Heart left ventricle (tissue), 16 donors: ENCODE measurements at regions of chr1 and their contacts with region 1.

Region 1: GRCh38 chr1:231240883-231241735 is at the start of gene GNPAT:
- DNase-seq: peak; percentile 89 to 95 (median 91)
- ATAC-seq: peak; percentile 98 to 99 (median 98)
- H3K4me3 ChIP-seq: peak within 1 kb of the TSS; percentile 65 to 94 (median 78)
- H3K27ac ChIP-seq: peak within 1 kb of the TSS; percentile 31 to 90 (median 84)
- H3K4me1 ChIP-seq: peaks cover 0 to 50% (median 30%) of the 10 kb centered on the region in 12 donors
- H3K27me3 ChIP-seq: no peaks in the 10 kb centered on the region
- CTCF ChIP-seq: no peak
- POLR2A ChIP-seq: peak in 1 of 2 donors; percentile 84
- total RNA-seq, gene GNPAT: 43.3 to 62.6 (median 52.8) TPM

Region 2: GRCh38 chr1:231278100-231278790 is 37.1 kb after region 1 on chr1:
- intact Hi-C with region 1: no loop called
- DNase-seq: peak; percentile 53 to 87 (median 64)
- ATAC-seq: peak; percentile 96 to 97 (median 96)
- H3K4me3 ChIP-seq: no peak overlapping the region
- H3K27ac ChIP-seq: peak overlapping the region; percentile 12 to 82 (median 69)
- H3K4me1 ChIP-seq: peaks cover 0 to 9% (median 4%) of the 10 kb centered on the region in 12 donors
- H3K27me3 ChIP-seq: no peaks in the 10 kb centered on the region
- CTCF ChIP-seq: no peak
- POLR2A ChIP-seq: no peak

Region 3: GRCh38 chr1:231337472-231338269 is 96.6 kb after region 1 on chr1 and contains the start of gene EXOC8:
- intact Hi-C with region 1: loop called in 5 of 10 experiments (anchors 2 to 10 kb)
- DNase-seq: peak; percentile 94 to 98 (median 95)
- ATAC-seq: peak; percentile 95 to 97 (median 96)
- H3K4me3 ChIP-seq: peak within 1 kb of the TSS; percentile 63 to 96 (median 82)
- H3K27ac ChIP-seq: peak within 1 kb of the TSS; percentile 76 to 98 (median 96)
- H3K4me1 ChIP-seq: peaks cover 14 to 63% (median 52%) of the 10 kb centered on the region in 12 donors
- H3K27me3 ChIP-seq: no peaks in the 10 kb centered on the region
- CTCF ChIP-seq: peak in 1 of 12 donors; percentile 11
- POLR2A ChIP-seq: peak in 1 of 2 donors; percentile 93
- total RNA-seq, gene EXOC8: 10.2 to 14.8 (median 12.8) TPM

Region 4: DNA sequence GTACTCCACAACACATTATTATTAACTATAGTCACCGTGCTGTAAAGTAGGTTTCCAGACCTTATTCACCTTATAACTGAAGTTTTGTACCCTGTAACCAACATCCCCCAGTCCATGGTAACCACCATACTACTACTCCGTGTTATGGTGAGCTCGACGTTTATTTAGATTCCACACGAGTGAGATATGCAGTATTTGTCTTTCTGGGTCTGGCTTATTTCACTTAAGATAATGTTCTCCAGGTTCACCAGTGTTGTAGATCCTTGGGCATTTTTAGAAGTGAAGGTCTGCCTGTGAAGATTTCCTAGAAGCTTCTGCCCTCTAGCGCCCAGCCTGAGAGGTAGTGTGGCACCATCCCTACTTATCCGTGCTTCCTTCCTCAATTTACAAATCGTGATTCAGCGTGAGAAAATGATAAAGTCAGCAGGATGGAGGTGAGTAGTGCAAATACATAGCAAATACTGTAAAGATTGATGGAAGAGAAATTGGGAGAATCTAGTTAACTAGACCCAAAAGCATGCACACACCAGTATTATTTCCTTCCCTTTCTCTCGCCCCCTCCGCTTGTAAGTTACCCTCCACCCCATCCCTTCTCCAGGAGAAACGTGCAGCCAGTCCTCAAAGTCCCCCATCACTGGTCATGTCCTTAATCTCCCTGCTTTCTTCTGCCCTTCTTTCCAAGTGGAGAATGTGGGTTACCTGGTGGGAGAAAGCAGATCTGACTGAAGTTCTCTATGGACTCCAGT is 349.5 kb after region 1 on chr1:
- intact Hi-C with region 1: loop called in 1 of 10 experiments (anchors 10 kb)
- DNase-seq: peak in 4 of 5 donors; percentile 47 to 70 (median 53)
- ATAC-seq: peak; percentile 64 to 95 (median 92)
- H3K4me3 ChIP-seq: no peak overlapping the region
- H3K27ac ChIP-seq: peak overlapping the region in 1 of 12 donors; percentile 10
- H3K4me1 ChIP-seq: peaks cover 0 to 16% (median 6%) of the 10 kb centered on the region in 12 donors
- H3K27me3 ChIP-seq: no peaks in the 10 kb centered on the region
- CTCF ChIP-seq: peak; percentile 65 to 85 (median 76)
- POLR2A ChIP-seq: no peak

Region 5: DNA sequence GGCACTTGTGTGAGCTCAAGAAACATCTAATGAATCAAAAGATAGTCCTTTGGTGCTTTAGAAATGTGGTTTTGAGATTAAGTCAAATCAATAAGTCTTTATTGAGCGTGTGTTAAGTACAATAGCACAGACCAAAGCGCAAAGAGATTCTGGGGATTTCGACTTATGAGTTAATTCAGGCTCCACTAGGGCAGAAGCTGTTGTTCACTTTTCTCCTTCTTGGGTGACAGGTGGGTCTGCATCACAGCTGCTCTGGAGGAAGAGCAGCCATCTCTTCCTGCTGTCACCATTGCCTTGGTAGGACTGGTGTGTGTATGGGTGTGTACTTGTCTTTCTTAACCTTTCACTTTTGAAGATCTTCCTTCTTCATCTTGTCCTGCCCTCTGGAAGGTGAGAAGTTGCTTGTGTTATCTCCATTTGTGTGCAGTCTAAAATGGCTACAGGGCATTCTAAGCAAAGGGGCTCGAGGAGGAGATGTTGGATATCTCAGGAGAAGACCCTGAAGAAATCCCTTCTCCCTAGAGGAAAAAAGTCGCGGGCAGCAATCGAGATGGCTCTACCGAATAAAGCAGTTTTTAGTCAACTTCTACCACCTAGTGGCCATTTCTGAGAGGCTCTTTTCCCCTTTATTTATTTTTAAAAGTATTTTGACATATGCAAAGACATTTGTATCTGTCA is 362.6 kb after region 1 on chr1:
- intact Hi-C with region 1: loop called in 4 of 10 experiments (anchors 10 kb)
- DNase-seq: no peak
- ATAC-seq: peak in 3 of 4 donors; percentile 46 to 67 (median 56)
- H3K4me3 ChIP-seq: peak overlapping the region in 10 of 12 donors; percentile 37 to 61 (median 52)
- H3K27ac ChIP-seq: peak overlapping the region in 7 of 12 donors; percentile 30 to 67 (median 40)
- H3K4me1 ChIP-seq: peaks cover 0 to 44% (median 23%) of the 10 kb centered on the region in 12 donors
- H3K27me3 ChIP-seq: no peaks in the 10 kb centered on the region
- CTCF ChIP-seq: peak; percentile 66 to 88 (median 78)
- POLR2A ChIP-seq: no peak